ENCODE measurements at regions of chr12 and their contacts with region 1.

Region 1: GRCh38 chr12:52307836-52308805 is 13.1 kb downstream of the KRT83 start:
- DNase-seq: peak; percentile 50 to 80 (median 71)
- H3K4me3 ChIP-seq: peak overlapping the region in 5 of 7 experiments; percentile 38 to 76 (median 61)
- H3K27ac ChIP-seq: no peak overlapping the region
- H3K4me1 ChIP-seq: peaks cover 0 to 24% (median 21%) of the 10 kb centered on the region in 4 experiments
- H3K27me3 ChIP-seq: peaks cover 3 to 57% (median 30%) of the 10 kb centered on the region in 5 experiments

Region 2: GRCh38 chr12:52249051-52249461 is 59.1 kb before region 1 on chr12:
- CTCF ChIA-PET with region 1: interaction called, 11 read pairs
- POLR2A ChIA-PET with region 1: no interaction called
- DNase-seq: no peak
- H3K4me3 ChIP-seq: no peak overlapping the region
- H3K27ac ChIP-seq: no peak overlapping the region
- H3K4me1 ChIP-seq: peaks cover 0 to 35% (median 20%) of the 10 kb centered on the region in 4 experiments
- H3K27me3 ChIP-seq: peaks cover 0 to 34% (median 9%) of the 10 kb centered on the region in 5 experiments

Region 3: DNA sequence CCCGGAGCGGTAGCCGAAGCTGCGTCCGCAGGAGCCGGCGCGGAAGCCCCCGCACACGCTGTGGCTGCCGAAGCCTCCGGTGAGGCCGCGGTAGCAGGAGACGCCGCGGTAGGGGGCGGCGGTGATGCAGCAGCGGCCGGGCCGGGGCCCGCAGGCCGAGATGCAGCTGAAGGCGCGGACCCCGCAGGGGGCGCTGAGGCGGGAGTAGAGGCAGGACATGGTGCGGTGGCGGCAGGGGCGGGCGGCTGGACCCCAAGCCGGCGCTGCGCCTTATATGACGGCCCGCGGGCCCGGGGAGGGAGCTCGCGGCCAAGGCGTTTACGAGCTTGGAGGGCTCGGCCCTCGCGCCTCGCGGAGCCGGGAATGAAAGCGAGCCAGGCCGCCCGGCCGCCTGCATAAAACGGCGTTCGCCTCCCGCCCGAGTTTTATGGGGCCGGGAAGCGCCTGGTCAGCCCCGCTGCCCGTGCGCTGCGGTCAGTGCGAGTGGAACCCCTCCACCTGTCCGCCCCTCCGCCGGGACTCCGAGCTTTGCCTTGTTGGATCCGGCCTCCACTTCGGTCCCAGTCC is 49.7 kb before region 1 on chr12:
- CTCF ChIA-PET with region 1: interaction called, 12 read pairs
- POLR2A ChIA-PET with region 1: no interaction called
- DNase-seq: peak in 2 of 3 donors; percentile 24 to 42
- H3K4me3 ChIP-seq: peak overlapping the region in 2 of 7 experiments; percentile 6 to 38
- H3K27ac ChIP-seq: no peak overlapping the region
- H3K4me1 ChIP-seq: peaks cover 13 to 44% (median 36%) of the 10 kb centered on the region in 4 experiments
- H3K27me3 ChIP-seq: peaks cover 3 to 69% (median 47%) of the 10 kb centered on the region in 5 experiments

Region 4: DNA sequence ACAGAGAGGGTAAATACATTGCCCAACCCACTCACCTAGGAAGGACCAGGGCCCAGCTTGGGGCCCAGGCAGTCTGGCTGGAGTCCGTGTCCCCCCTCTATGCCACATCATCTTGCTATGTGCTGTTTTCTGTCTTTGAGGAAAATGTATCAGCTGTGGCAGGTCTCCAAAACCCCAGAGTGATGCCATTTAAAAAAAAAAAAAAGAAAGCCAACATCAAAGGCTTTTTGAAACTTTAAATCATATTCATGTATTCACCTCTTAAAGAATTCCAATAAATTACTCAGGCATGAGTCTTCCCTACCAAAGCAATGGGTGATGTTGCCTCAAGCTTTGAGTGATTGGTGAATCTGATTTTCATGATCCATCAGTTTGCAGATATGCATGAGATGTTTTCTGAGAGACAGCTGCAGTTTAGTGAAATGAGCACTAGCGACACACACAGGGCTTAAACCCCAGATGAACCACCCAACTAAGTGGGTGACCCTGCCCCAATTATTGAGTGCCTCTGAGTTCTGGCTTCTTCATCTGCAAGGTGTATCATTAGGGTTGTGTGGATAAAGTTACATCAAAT is 22.9 kb before region 1 on chr12:
- CTCF ChIA-PET with region 1: interaction called, 72 read pairs
- POLR2A ChIA-PET with region 1: no interaction called
- DNase-seq: no peak
- H3K4me3 ChIP-seq: no peak overlapping the region
- H3K27ac ChIP-seq: no peak overlapping the region
- H3K4me1 ChIP-seq: peaks cover 0 to 14% (median 11%) of the 10 kb centered on the region in 4 experiments
- H3K27me3 ChIP-seq: peaks cover 0 to under 1% (median 0%) of the 10 kb centered on the region in 5 experiments

Region 5: DNA sequence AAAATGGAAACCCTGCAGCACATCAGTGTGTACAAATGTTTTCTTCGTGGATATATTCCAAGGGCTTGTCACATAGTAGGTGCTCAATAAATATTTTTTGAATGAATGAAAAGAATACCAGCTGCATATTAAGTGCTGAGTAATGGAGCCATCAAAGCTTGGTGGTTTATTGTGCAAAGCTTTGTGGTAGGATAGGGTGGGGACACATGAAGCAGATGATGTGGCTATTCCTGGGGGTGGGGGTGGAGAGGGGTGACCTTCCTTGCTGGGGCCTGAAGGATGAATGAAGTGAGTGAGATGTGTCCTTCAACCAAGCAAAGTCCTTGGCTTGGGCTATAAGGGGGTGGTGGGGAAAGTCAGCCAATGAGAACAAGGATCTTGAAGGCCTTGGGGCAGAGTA is 12.5 kb before region 1 on chr12:
- CTCF ChIA-PET with region 1: interaction called, 27 read pairs
- POLR2A ChIA-PET with region 1: no interaction called
- DNase-seq: peak in 2 of 3 donors; percentile 47 to 57
- H3K4me3 ChIP-seq: no peak overlapping the region
- H3K27ac ChIP-seq: no peak overlapping the region
- H3K4me1 ChIP-seq: peaks cover 0 to 10% (median 0%) of the 10 kb centered on the region in 4 experiments
- H3K27me3 ChIP-seq: peaks cover 0 to 8% (median 2%) of the 10 kb centered on the region in 5 experiments

Region 6: DNA sequence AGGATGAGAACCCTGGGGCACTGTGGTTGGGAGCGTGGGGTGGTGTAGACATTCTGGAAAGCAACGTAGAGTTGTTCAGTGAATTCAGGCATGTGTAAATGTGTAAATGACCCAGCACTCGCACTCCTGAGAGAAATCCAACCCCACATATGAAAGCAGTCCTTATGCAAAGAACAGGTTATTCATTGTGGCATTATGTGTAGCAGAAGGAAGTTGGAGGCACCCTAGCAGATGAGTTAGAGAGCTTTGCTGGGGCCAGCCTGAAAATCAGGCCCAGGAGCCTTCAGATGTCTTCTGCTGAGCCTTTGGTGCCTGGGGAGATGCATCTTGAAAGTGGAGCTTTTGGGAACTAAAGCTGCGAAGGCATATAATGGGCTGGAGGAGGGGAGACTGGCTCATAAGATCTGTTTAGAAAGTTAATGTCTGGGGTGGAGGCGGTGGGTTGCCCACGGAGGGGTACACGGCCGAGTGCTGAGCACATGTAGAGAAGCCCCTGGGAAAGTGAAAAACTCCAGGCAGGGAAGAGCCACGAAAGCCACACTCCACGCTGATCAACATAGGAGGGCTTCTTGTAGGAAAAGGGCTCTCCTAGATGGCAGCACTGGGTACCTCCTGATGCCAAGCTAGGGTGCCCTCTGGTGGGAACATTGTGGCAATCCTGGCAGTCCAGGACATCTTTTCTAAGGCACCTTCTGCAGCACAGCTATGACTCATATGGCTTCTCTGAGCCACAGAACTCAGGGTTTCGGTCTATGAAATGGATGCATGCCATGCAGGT is 19.1 kb after region 1 on chr12:
- CTCF ChIA-PET with region 1: interaction called, 151 read pairs
- POLR2A ChIA-PET with region 1: interaction called, 3 read pairs
- DNase-seq: peak; percentile 91 to 95 (median 94)
- H3K4me3 ChIP-seq: no peak overlapping the region
- H3K27ac ChIP-seq: no peak overlapping the region
- H3K4me1 ChIP-seq: no peaks in the 10 kb centered on the region
- H3K27me3 ChIP-seq: peaks cover 0 to 9% (median 3%) of the 10 kb centered on the region in 5 experiments

Region 7: DNA sequence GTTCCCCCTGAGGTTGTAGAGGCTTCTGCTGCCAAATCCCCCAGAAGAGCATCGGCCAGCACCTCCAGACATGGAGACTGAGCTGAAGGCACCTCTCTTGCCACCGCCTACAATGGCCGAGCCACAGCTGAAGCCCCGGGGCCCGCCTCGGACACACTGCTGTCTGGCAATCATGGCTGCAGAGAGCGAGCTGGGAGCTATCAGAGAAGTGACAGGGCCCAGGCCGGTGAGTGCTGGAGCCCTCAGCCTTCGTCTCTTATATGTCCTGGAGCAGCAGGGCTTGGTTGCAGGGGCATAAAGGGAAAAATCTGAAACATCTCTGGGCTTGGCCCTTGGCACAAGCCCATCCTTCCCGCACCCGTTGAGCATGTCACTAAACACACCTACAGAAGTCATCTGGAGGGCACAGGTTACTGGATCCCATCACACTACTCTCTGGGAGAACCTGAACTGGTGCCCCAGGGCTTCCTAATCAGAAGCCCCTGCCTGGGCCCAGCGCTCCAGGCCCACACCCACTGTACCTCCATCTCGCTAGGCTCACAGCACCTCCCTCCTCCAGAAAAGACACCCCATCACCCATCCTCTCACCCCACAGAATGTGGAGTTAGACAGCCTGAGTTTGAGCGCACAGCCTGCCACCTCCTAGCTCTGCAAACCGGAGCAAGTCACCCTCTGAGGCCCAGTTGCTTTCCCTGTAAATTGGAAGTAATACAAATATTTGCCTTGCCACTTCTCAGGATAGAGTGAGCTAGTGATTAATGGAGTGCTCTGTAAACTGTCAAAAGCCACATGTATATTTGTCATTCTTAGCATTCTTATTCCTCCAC is 506.0 kb after region 1 on chr12 and contains the start of gene KRT4:
- CTCF ChIA-PET with region 1: no interaction called
- POLR2A ChIA-PET with region 1: no interaction called
- DNase-seq: no peak
- H3K4me3 ChIP-seq: no peak within 1 kb of the TSS
- H3K27ac ChIP-seq: no peak within 1 kb of the TSS
- H3K4me1 ChIP-seq: no peaks in the 10 kb centered on the region
- H3K27me3 ChIP-seq: peaks cover 0 to 5% (median 1%) of the 10 kb centered on the region in 5 experiments

Measured in common myeloid progenitor, CD34-positive (primary cell).